Activated B cell treated with CpG ODN at 0.5 μM for 24 hours (primary cell): ENCODE measurements at regions of chr6 and their contacts with region 1.

Region 1: DNA sequence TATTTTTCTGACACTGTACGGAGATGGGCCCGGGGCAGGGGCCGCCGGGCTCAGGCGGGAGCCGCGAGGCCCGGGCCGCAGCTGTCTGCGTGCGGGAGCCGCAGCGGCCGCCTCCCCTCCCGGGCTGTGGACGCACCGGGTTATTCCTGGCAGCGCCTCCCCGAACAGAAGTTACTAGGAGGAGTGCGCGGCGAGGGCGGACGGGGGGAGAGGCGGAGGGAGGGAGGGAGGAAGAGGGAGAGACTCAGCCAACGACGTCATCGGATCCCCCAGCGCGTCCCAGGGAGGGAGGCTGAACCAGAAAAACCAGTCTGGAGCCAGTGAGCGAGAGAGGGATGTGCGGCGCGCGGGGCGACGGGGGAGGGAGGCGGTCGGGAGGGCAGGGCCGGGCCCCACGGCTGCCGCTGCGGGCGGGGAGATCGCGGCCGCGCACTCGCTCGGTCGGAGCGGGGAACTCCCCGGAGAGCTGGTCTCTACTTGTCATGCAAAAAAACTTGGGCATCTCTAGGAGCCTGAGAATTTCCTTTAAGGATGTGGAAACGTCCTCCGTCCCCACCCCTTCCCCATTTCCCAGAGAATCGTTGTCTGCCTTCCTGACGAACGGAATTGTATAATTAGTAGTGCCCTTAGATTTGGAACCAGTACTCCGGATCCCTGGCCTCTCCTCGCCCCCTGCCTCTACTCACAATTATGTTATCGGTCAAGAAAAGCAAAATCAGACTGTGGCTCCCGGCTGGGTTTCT is 1.4 kb upstream of the HIVEP2 start:
- DNase-seq: peak; percentile 75
- ATAC-seq: peak; percentile 38
- H3K4me3 Mint-ChIP-seq: peak overlapping the region; percentile 93
- H3K27ac Mint-ChIP-seq: peak overlapping the region; percentile 96
- H3K4me1 Mint-ChIP-seq: peaks cover 41% of the 10 kb centered on the region
- H3K27me3 Mint-ChIP-seq: no peaks in the 10 kb centered on the region
- CTCF ChIP-seq: no peak

Region 2: DNA sequence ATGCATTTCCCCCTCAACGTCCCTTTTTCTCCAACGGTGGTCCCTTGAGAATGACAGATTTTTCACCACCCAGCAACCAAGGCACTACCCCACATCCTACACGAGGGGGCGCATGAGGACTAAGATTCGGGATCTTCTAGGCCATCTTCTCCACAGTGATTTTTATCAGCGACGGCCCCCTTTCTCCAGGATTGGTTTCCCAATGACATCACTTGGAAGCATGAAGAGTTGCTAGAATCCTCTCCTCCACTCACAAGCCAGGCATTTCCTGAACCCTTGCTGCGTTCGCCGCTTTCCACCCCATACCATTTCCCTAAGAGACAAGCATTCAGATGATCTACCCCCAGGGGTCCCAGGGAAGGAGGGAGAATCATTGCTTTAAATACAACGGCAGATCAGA is 253.4 kb before region 1 on chr6:
- CTCF ChIA-PET with region 1: interaction called, 4 read pairs
- POLR2A ChIA-PET with region 1: no interaction called
- intact Hi-C with region 1: loop called (anchors 2 kb)
- DNase-seq: peak; percentile 42
- ATAC-seq: peak; percentile 89
- H3K4me3 Mint-ChIP-seq: no peak overlapping the region
- H3K27ac Mint-ChIP-seq: no peak overlapping the region
- H3K4me1 Mint-ChIP-seq: peaks cover 6% of the 10 kb centered on the region
- H3K27me3 Mint-ChIP-seq: no peaks in the 10 kb centered on the region
- CTCF ChIP-seq: peak; percentile 18

Region 3: DNA sequence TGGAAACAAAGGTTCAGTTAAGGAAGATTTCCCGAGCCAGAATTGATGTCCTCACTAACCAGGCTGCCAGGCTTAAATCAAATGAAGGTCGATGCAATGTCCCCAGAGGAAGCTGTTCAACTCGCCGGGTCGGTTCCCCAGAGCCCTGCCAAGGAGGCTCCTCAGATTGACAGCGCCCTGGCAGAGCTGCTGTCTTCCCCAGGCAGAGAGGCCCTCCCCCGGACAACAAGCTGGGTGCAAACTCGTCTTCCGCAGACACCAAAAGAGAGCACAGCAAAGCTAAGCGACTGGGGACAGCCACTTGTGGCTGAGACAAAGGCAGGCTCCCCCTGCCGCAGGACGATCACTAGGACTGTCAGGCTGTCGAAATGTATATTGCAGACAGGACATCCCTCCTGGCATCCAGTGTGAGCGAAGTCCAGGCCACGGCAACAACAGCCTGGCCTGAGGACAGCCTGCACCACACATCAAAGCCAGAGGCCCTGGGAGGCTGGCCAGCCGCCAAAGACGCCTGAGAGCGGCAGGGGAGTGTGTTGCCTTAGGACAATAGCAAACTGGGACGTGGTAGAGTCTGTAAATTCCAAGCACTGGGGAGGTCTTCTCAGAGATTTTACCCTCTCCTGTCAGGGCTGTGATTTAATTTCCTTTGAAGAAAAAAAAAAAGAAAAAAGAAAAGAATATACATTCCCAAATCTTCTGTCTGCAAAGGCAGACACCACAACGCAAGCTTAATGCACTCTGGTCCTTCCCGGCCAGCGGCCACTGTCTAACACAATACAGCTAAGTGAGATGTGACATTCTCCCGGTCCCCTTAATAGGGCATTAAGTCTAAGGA is 100.5 kb before region 1 on chr6:
- CTCF ChIA-PET with region 1: no interaction called
- POLR2A ChIA-PET with region 1: interaction called, 6 read pairs
- intact Hi-C with region 1: loop called (anchors 1 kb)
- DNase-seq: no peak
- ATAC-seq: peak; percentile 60
- H3K4me3 Mint-ChIP-seq: peak overlapping the region; percentile 78
- H3K27ac Mint-ChIP-seq: peak overlapping the region; percentile 90
- H3K4me1 Mint-ChIP-seq: peaks cover 95% of the 10 kb centered on the region
- H3K27me3 Mint-ChIP-seq: no peaks in the 10 kb centered on the region
- CTCF ChIP-seq: no peak

Region 4: GRCh38 chr6:142926494-142927270 is 19.7 kb before region 1 on chr6:
- CTCF ChIA-PET with region 1: no interaction called
- POLR2A ChIA-PET with region 1: interaction called, 32 read pairs
- intact Hi-C with region 1: loop called (anchors 1 kb)
- DNase-seq: peak; percentile 72
- ATAC-seq: peak; percentile 93
- H3K4me3 Mint-ChIP-seq: peak overlapping the region; percentile 86
- H3K27ac Mint-ChIP-seq: peak overlapping the region; percentile 93
- H3K4me1 Mint-ChIP-seq: peaks cover 50% of the 10 kb centered on the region
- H3K27me3 Mint-ChIP-seq: no peaks in the 10 kb centered on the region
- CTCF ChIP-seq: no peak

Region 5: DNA sequence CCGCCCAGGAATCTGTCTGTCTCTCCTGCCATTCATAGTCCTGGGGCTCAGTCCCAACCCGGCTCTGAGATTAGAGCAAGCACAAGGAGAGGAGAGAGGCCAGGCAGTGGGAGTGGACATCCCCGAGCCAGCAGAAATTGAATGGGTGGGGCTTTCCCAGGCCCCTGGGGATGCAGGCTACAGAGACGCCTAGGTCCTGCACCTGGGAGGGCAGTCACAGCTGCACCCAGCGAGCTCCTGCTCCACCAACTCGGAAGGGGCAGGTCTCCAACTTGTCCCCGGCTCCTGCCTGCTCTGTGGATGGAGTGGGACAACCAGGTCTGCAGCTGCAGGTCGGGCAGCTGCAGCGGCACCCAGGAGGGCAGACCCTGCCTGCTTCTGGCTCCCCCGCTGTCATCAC is 103.3 kb after region 1 on chr6:
- CTCF ChIA-PET with region 1: no interaction called
- POLR2A ChIA-PET with region 1: no interaction called
- intact Hi-C with region 1: no loop called
- DNase-seq: no peak
- ATAC-seq: no peak
- H3K4me3 Mint-ChIP-seq: no peak overlapping the region
- H3K27ac Mint-ChIP-seq: no peak overlapping the region
- H3K4me1 Mint-ChIP-seq: no peaks in the 10 kb centered on the region
- H3K27me3 Mint-ChIP-seq: peaks cover 9% of the 10 kb centered on the region
- CTCF ChIP-seq: no peak

Region 6: DNA sequence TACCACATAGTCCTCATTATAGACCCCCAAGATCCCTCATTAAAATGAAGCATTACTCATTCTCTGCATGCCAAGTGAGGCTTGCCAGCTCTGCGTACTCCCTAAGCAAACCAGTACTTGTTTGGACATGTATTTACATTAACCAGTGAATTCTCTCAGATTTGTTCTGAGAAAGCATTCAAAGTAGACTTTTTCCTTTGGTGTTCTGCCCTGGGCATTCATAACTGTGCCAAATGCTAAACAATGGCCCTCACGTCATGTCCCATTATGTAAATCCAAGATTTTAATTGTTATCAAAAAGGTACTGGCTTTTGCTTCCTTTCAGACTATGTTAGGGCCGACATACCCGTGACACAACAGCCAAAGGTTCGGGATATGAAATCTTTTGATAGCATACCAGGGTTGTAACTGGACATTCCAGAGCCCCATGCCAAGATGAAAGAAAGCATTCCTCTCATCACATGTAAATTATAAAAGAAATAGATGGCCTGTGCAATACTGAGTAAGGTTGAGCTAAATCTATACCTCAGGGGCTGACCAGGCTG is 340.0 kb after region 1 on chr6:
- CTCF ChIA-PET with region 1: no interaction called
- POLR2A ChIA-PET with region 1: no interaction called
- intact Hi-C with region 1: no loop called
- DNase-seq: no peak
- ATAC-seq: no peak
- H3K4me3 Mint-ChIP-seq: no peak overlapping the region
- H3K27ac Mint-ChIP-seq: no peak overlapping the region
- H3K4me1 Mint-ChIP-seq: no peaks in the 10 kb centered on the region
- H3K27me3 Mint-ChIP-seq: no peaks in the 10 kb centered on the region
- CTCF ChIP-seq: no peak

Region 7: DNA sequence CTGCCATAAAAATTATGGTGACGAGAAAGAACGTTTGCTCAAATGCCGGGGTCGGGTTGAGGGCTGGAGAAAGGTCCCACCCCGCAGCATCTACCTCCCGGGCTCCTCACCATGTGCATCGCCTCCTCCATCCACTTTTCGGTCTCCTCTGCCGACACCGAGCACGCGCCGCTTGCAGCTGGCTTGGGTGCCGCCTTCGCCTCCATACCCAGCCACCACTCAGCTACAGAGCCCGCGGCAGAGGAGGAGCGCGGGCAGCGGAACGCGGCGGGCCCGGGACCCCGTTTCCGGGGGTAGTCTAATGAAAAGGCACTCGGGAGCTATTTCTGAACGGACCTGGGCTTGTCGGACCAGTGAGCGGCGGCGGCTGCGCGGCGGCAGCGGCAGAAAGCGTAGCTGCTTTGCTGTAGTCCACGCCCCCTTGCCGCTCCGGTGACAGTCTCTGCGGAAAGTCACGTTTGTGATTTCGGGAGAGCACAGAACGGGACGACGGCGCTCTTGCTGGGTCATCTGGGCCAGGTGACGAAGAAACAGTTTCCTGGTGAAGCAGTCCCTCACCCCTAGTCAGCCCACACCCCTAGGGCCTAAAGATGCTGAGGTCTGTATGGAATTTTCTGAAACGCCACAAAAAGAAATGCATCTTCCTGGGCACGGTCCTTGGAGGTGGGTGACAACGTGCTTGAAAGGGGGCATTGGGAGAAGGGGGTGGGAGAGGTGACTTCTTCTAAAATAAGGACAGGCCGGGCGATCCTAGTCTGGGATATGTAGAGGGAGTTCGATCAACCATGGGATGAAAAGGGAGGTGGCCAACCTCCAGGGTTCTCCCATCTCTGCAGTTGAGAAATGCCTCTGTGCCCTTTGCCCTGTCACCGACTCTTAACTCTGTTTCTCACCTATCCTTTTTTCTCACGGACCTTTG is 504.4 kb after region 1 on chr6 and contains the starts of genes ADAT2 and PEX3:
- CTCF ChIA-PET with region 1: no interaction called
- POLR2A ChIA-PET with region 1: interaction called, 5 read pairs
- intact Hi-C with region 1: loop called (anchors 2 kb)
- DNase-seq: peak; percentile 90
- ATAC-seq: peak; percentile 91
- H3K4me3 Mint-ChIP-seq: peak within 1 kb of the TSS; percentile 98
- H3K27ac Mint-ChIP-seq: peak within 1 kb of the TSS; percentile 96
- H3K4me1 Mint-ChIP-seq: peaks cover 39% of the 10 kb centered on the region
- H3K27me3 Mint-ChIP-seq: no peaks in the 10 kb centered on the region
- CTCF ChIP-seq: no peak
- total RNA-seq, gene ADAT2: 22.4 and 30.2 TPM in 2 replicates
- total RNA-seq, gene PEX3: 21.7 and 26.5 TPM in 2 replicates

Region 8: DNA sequence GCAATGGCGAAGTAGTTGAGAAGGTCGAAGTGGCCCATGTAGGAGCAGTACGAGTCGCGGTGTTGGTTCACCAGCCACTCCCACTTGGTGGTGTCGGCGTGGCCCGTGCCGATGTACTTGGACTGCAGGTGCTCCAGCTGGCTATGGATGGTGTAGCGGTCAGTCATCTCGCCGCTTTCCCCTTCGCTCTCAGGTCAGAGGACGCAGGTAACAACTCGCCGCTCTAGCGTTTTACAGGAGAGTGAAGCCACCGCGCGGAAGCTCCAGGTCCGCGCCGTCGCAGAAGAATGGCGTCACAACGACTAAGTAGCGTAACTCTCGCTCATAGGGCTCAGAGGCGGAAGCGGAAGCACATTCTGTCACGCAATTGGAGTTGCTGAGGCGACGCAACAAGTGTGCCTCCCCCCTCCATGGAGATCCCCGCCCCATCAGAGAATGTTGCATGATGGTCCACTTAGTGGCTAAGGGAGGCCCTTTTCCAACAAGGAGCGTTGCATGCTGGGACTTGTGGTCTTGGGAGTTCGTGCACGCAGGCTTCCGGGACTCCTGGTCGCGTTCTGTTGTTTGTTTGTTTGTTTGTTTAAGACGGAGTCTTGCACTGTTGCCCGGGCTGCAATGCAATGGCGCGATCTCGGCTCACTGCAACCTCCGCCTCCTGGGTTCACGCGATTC is 1149.1 kb after region 1 on chr6 and contains the start of gene SF3B5:
- CTCF ChIA-PET with region 1: no interaction called
- POLR2A ChIA-PET with region 1: no interaction called
- intact Hi-C with region 1: loop called (anchors 2 kb)
- DNase-seq: peak; percentile 93
- ATAC-seq: peak; percentile 96
- H3K4me3 Mint-ChIP-seq: peak within 1 kb of the TSS; percentile 99
- H3K27ac Mint-ChIP-seq: peak within 1 kb of the TSS; percentile 99
- H3K4me1 Mint-ChIP-seq: peaks cover 24% of the 10 kb centered on the region
- H3K27me3 Mint-ChIP-seq: no peaks in the 10 kb centered on the region
- CTCF ChIP-seq: no peak
- total RNA-seq, gene SF3B5: 144 and 147 TPM in 2 replicates